Posterior cingulate gyrus (tissue), 11 donors: ENCODE measurements at regions of chr20 and their contacts with region 1.

Region 1: GRCh38 chr20:21235484-21236445 is 67.4 kb upstream of the XRN2 start:
- DNase-seq: peak; percentile 58 to 97 (median 82)

Region 2: GRCh38 chr20:20849161-20849560 is 386.6 kb before region 1 on chr20:
- intact Hi-C with region 1: loop called (anchors 5 kb)
- DNase-seq: peak in 9 of 10 donors; percentile 45 to 95 (median 73)

Region 3: GRCh38 chr20:21125849-21126580 is 109.8 kb before region 1 on chr20 and contains the start of gene KIZ:
- intact Hi-C with region 1: loop called (anchors 10 kb)
- DNase-seq: peak; percentile 93 to 99 (median 96)

Region 4: GRCh38 chr20:21179796-21180195 is 56.0 kb before region 1 on chr20:
- intact Hi-C with region 1: no loop called
- DNase-seq: no peak

Region 5: DNA sequence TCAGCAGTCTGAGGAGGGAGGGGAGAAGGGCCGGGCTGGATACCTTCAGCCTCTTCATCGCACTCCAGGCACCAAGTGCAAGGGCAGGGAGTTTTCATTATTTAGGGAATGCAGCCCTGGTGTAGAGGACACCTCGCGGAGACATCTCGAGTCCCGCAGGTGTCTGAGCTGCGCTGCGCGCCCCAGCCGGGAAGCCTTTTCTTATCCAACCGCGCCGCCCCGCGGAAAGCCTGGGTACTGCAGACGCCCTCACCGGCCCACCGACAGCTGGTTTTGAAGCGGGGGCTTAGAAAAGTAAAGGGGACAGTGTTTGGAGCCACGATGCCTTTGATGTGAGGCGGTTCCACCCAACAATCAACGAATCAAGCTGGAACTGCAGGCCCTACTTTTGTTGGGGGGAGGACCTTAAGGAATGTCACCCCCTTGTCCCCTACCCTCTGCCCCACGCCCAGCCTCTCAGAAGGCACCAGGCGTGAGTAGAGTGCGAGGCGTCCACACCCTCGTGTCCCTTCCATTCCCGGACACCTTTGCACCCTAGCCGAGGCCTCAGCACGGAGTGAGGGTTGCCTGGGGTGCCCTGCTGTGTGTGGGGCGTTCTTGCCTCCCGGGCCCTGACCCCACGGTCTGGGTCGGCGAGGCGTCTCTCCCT is 269.5 kb after region 1 on chr20:
- intact Hi-C with region 1: loop called (anchors 1 kb)
- DNase-seq: peak in 9 of 10 donors; percentile 66 to 95 (median 81)

Region 6: DNA sequence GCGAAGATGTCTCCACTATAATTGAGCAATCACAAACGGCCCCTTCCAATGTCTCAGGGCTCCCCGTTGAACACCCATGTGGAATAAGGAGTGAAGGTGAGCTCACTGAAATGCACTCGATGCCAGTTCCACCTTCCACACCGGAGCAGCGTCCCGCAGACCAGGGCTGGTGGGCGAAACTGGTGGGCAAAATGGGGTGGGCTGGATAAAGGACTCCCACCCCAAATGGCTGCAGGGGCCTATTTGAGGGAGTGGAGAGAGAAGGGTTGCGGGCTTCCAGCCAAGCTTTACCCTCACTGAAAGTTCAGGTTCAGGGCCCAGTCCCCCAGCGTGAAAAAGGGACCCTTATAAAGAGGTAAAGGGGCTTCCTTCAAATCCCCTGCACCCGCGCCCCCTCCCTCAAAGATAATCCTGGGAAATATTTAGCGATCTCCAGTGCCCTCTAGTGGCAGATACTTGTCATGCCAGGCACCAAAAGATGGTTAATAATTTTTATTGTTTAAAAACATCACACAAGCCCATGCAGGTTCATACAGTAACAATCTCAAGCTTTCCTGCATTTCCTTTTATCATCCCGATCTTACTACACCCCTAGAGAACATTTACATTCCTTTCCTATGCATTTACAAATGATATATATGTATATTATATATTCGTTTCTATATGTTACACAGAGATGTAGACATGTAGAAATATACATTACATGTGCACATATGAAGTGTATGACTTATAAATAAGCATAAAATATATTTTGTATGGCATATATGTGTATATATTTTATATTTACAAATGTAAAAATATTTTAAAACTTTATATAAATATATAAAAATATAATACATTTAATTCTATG is 336.3 kb after region 1 on chr20:
- intact Hi-C with region 1: loop called (anchors 2 kb)
- DNase-seq: peak in 2 of 10 donors; percentile 25 to 36